ENCODE measurements at regions of chr5 and their contacts with region 1.

Region 1: GRCh38 chr5:170100066-170100943 is 5.4 kb upstream of the FOXI1 start:
- DNase-seq: peak; percentile 51 to 66 (median 56)
- H3K4me3 ChIP-seq: no peak overlapping the region
- H3K4me3 Mint-ChIP-seq: no peak overlapping the region
- H3K27ac ChIP-seq: no peak overlapping the region
- H3K27ac Mint-ChIP-seq: peak overlapping the region in 2 of 7 donors; percentile 44 to 62
- H3K4me1 ChIP-seq: no peaks in the 10 kb centered on the region
- H3K4me1 Mint-ChIP-seq: peaks cover 0 to 1% (median 0%) of the 10 kb centered on the region in 4 donors
- H3K27me3 ChIP-seq: no peaks in the 10 kb centered on the region
- H3K27me3 Mint-ChIP-seq: peaks cover 1 to 7% of the 10 kb centered on the region in 2 donors

Region 2: DNA sequence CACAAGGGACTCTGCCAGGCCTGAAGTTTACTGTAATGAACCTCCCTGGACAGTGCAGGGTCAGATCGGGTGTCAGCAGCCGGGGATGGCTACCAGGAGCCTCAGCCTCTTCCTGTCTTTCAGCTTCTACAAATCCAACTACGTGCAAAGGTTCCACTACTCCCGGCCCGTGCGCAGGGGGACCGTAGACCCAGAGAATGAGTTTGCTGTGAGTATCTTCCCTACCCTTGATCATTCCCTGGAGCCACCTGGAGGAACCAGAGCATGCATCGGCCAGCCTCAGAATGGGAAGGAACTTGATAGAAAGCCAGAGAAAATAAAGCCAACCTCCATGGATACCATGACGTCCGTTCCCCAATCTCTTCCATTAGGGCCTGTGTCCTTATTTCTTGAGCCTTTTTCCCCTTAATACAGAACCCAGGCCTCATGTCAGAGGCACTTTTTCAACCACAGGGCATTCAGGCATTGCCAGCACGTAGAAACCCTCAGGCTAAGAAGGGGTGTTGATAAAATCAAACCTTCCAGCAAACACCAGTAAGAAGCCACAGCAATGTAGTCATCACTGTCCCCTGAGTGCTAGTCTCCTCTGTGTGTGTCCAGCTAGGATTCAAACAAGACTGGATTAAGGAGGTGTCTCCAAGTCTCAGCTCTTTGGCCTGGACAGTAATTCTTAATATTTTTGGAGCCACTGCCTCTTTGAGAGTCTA is 43.6 kb before region 1 on chr5:
- CTCF ChIA-PET with region 1: no interaction called
- POLR2A ChIA-PET with region 1: no interaction called
- intact Hi-C with region 1: no loop called
- DNase-seq: no peak
- H3K4me3 ChIP-seq: no peak overlapping the region
- H3K4me3 Mint-ChIP-seq: no peak overlapping the region
- H3K27ac ChIP-seq: no peak overlapping the region
- H3K27ac Mint-ChIP-seq: no peak overlapping the region
- H3K4me1 ChIP-seq: no peaks in the 10 kb centered on the region
- H3K4me1 Mint-ChIP-seq: peaks cover 0 to 3% (median 1%) of the 10 kb centered on the region in 4 donors
- H3K27me3 ChIP-seq: no peaks in the 10 kb centered on the region
- H3K27me3 Mint-ChIP-seq: no peaks in the 10 kb centered on the region

Region 3: DNA sequence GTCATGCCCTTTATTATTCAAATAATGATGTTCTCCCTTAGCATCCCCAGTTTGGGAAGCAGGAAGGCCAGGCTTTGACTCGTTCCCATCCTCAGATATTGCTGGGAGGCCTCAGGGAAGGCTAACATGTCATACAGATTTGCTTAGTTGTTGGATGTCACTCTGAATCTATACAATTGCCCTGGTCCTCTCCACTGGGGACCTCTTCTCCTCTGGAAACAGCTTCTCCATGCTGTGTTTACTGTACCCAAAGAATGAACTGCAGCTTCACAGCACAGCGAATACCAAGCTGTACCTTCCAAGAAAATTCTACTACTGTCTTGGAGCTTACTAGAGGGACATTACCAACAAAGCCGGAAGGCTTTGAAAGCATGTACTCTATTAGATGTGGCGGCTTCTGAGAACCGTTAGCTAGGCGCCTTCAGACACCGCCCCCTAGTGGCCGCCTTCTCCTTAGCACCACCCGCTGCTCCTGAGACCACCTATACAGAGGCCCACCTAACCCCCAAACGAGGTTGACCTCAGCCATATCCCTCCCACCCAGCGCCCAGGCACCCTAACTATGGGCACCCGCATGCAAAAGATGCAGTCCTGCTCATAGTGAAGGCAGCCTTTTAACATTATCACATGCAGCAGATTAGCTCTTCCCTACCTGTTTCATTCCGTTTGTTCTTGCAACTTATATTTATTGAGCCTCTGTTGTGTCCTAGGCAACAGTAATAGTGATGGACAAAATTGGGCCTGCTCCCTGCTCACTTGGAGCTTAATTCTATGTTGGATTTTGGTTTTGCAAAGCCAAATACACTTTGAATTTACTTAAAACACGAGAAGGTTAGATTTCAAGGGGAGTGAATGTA is 29.5 kb before region 1 on chr5:
- CTCF ChIA-PET with region 1: no interaction called
- POLR2A ChIA-PET with region 1: no interaction called
- intact Hi-C with region 1: no loop called
- DNase-seq: no peak
- H3K4me3 ChIP-seq: no peak overlapping the region
- H3K4me3 Mint-ChIP-seq: no peak overlapping the region
- H3K27ac ChIP-seq: no peak overlapping the region
- H3K27ac Mint-ChIP-seq: peak overlapping the region in 1 of 7 donors; percentile 23
- H3K4me1 ChIP-seq: no peaks in the 10 kb centered on the region
- H3K4me1 Mint-ChIP-seq: no peaks in the 10 kb centered on the region
- H3K27me3 ChIP-seq: no peaks in the 10 kb centered on the region
- H3K27me3 Mint-ChIP-seq: no peaks in the 10 kb centered on the region

Region 4: DNA sequence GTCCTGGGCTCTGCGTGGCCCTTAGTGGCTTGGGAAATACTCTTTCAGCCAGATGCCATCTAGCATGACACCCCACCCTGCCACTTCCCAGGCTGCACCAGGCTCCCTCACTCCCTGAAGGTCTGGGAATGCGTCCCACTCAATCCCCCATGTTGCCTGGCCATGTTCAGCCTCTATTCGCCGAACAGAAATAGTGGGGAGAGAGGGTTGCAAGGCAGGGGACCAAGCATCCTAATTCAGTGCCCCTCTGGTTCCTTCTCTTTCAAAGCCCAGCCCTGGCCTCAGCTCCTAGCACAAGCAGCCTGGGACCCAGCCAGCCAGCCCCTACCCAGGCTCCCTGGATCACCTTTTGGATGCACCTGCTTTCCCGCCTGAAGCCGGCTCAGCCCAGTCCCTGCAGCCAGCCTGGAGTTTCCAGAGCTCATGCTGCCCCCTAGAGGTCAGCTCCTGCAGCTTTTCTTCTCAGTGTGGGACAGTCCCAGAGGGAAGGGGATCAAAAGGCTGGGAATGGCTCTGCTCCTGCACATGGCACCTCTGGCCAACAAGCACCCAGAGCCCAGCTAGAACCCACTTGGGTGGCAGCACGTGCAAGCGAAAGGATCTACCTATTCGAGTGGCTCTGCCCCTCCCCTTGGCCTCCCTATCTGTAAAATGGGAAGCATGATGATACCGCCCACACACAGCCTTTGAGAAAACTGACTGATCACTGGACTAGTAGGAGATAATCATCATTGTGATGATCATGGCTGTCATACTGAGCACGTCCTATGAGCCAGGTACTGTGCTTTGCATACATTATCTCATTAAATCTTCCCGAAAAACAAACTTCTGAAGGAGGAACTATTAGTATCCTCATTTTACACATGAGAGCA is 83.7 kb after region 1 on chr5:
- CTCF ChIA-PET with region 1: interaction called, 5 read pairs
- POLR2A ChIA-PET with region 1: no interaction called
- intact Hi-C with region 1: loop called (anchors 5 kb)
- DNase-seq: peak in 4 of 5 donors; percentile 7 to 14 (median 10)
- H3K4me3 ChIP-seq: no peak overlapping the region
- H3K4me3 Mint-ChIP-seq: no peak overlapping the region
- H3K27ac ChIP-seq: no peak overlapping the region
- H3K27ac Mint-ChIP-seq: no peak overlapping the region
- H3K4me1 ChIP-seq: no peaks in the 10 kb centered on the region
- H3K4me1 Mint-ChIP-seq: no peaks in the 10 kb centered on the region
- H3K27me3 ChIP-seq: no peaks in the 10 kb centered on the region
- H3K27me3 Mint-ChIP-seq: peaks cover 11 to 13% of the 10 kb centered on the region in 2 donors

Region 5: DNA sequence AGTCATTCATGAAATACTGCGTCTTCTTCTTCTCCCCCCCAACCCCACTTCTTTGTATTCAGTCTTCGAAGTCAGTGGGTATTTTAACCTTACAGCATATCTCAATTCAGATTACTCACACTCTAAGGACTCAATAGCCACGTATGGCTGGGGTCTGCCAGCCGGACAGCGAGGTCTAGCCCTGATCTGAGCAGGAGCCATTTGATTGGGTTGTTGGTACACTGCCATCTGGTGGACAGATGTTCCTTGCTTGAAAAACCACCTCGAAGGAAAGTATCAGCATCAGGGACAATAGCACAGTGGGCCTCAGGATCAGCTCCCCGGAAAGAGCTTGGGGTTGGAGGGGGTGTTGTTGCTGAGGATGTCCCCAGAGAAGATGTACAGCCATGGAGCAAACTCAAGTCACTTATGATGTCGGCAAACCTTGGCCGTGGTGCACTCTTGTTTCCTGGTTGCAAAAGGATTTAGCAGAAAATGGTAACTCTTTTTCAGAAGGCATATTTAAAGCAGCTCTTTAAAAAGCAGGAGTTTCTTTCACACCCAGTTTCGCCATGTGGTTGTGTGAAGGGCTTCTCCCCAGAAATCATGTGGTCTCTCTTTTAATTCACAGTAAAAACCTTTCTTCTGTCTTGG is 320.6 kb after region 1 on chr5:
- CTCF ChIA-PET with region 1: interaction called, 27 read pairs
- POLR2A ChIA-PET with region 1: no interaction called
- intact Hi-C with region 1: loop called (anchors 1 kb)
- DNase-seq: peak; percentile 45 to 54 (median 53)
- H3K4me3 ChIP-seq: no peak overlapping the region
- H3K4me3 Mint-ChIP-seq: no peak overlapping the region
- H3K27ac ChIP-seq: no peak overlapping the region
- H3K27ac Mint-ChIP-seq: peak overlapping the region in 1 of 7 donors; percentile 24
- H3K4me1 ChIP-seq: peaks cover 19% of the 10 kb centered on the region
- H3K4me1 Mint-ChIP-seq: peaks cover 18 to 25% (median 23%) of the 10 kb centered on the region in 4 donors
- H3K27me3 ChIP-seq: no peaks in the 10 kb centered on the region
- H3K27me3 Mint-ChIP-seq: peaks cover 4 to 7% of the 10 kb centered on the region in 2 donors

Region 6: GRCh38 chr5:170633235-170634081 is 533.2 kb after region 1 on chr5:
- CTCF ChIA-PET with region 1: interaction called, 10 read pairs
- POLR2A ChIA-PET with region 1: no interaction called
- intact Hi-C with region 1: no loop called
- DNase-seq: peak in 1 of 5 donors; percentile 38
- H3K4me3 ChIP-seq: peak overlapping the region in 1 of 2 donors; percentile 43
- H3K4me3 Mint-ChIP-seq: peak overlapping the region; percentile 72 to 93 (median 85)
- H3K27ac ChIP-seq: no peak overlapping the region
- H3K27ac Mint-ChIP-seq: peak overlapping the region in 6 of 7 donors; percentile 25 to 82 (median 76)
- H3K4me1 ChIP-seq: peaks cover 19% of the 10 kb centered on the region
- H3K4me1 Mint-ChIP-seq: peaks cover 15 to 37% (median 22%) of the 10 kb centered on the region in 4 donors
- H3K27me3 ChIP-seq: no peaks in the 10 kb centered on the region
- H3K27me3 Mint-ChIP-seq: peaks cover 5 to 7% of the 10 kb centered on the region in 2 donors

Region 7: DNA sequence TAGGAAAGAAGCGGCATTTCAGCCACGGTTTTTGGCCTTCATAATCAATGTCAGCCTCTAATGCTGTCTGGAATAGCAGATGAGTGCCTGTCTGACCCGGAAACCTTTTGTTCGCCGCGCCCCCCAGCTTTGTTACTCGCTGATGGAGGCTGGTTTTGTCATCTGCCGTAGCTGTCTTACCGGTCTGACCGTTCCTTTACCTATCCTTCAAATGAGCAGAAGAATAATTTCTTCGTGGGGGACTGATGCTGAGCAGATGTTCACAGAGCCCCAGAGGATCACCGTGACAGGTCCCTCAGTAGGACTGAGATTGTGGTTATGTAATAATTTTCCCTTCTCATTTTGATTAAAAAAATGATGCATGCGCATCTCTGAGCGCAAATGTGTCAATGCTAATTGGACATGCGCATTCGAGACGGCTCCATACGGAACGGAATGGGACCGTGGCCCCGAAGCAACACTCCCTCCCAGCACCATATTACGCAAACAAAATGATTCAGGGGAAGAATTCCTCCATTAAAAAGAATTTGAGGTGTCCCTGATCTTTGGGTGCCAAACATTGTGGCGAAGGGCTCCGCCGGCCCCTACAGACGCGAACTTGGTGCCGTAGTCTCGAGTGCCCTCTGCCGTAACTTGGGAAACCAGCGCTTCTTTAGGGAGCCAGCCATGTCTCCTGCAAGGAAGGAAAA is 1236.4 kb after region 1 on chr5:
- CTCF ChIA-PET with region 1: no interaction called
- POLR2A ChIA-PET with region 1: no interaction called
- intact Hi-C with region 1: loop called (anchors 2 kb)
- DNase-seq: peak in 1 of 5 donors; percentile 23
- H3K4me3 ChIP-seq: no peak overlapping the region
- H3K4me3 Mint-ChIP-seq: peak overlapping the region; percentile 45 to 74 (median 68)
- H3K27ac ChIP-seq: no peak overlapping the region
- H3K27ac Mint-ChIP-seq: no peak overlapping the region
- H3K4me1 ChIP-seq: peaks cover 6% of the 10 kb centered on the region
- H3K4me1 Mint-ChIP-seq: peaks cover 0 to 13% (median 7%) of the 10 kb centered on the region in 4 donors
- H3K27me3 ChIP-seq: peaks cover 3% of the 10 kb centered on the region
- H3K27me3 Mint-ChIP-seq: peaks cover 4 to 23% of the 10 kb centered on the region in 2 donors